Activated B cell treated with CpG ODN at 0.5 μM for 24 hours (primary cell): ENCODE measurements at regions of chr6 and their contacts with region 1.

Region 1: DNA sequence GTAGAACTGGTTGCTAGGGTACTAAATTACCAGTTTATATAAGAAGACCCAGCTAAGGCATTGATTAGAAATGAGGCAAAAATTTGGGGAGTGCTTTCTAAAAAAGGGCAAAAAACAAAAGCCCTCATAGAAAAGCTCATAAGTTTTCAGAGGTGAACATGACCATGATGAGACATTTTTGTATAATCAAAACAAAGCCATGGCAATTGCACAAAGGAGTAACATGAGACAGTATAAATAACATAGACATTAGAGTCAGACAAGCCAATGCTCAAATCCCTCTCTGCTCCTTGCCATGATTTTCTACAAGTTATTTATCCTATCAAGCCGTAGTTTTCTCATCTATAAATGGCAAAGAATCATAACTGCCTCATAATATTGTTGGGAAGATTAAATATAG is 112.2 kb upstream of the ADTRP start:
- DNase-seq: no peak
- ATAC-seq: no peak
- H3K4me3 Mint-ChIP-seq: no peak overlapping the region
- H3K27ac Mint-ChIP-seq: no peak overlapping the region
- H3K4me1 Mint-ChIP-seq: no peaks in the 10 kb centered on the region
- H3K27me3 Mint-ChIP-seq: no peaks in the 10 kb centered on the region
- CTCF ChIP-seq: no peak

Region 2: DNA sequence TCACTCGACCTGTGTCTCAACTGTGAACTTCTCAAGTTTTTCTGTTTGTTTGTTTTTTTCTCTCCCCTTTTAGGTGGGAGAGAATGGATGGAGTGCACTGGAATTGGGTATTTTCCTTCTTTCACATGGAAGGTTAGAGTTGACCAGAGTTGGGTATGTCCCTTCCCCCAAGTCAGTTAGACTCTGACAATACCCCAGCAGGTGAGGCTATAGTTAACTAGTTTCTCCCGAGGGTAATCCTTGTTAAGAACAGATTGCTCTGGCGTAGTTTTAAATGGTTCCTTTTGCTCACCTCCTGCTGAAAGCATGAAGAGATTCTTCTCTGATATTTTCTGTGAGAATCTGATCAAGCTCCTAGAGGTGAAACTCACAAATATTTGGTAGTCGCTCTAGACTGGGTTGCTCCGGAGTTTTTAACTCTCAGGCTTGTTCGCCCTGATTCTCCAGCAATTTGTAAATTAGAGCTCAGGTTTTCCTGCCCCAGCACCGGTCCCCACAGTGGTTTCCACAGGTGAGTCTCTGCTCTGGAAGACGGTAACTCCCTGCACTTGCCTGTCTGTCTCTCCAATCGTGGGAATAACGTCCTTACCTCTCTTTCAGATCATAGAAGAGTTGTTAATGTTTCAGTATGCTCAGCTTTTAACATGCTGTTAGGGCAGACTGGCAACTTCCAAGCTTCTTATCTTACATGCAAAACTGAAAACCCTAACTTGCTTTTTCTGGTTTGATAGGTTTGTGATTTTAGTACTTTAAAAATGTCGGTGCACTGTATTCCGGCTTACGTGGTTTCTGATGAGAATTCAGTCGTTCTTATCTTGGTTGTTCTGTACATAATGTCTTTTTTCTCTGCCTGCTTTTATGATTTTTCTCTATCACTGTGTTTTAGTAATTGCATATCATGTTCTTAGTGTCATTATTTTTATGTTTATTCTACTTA is 10.1 kb after region 1 on chr6:
- CTCF ChIA-PET with region 1: no interaction called
- POLR2A ChIA-PET with region 1: no interaction called
- intact Hi-C with region 1: loop called (anchors 2 kb)
- DNase-seq: no peak
- ATAC-seq: no peak
- H3K4me3 Mint-ChIP-seq: no peak overlapping the region
- H3K27ac Mint-ChIP-seq: no peak overlapping the region
- H3K4me1 Mint-ChIP-seq: peaks cover 12% of the 10 kb centered on the region
- H3K27me3 Mint-ChIP-seq: peaks cover 21% of the 10 kb centered on the region
- CTCF ChIP-seq: no peak

Region 3: GRCh38 chr6:12311106-12311505 is 420.3 kb after region 1 on chr6:
- CTCF ChIA-PET with region 1: no interaction called
- POLR2A ChIA-PET with region 1: no interaction called
- intact Hi-C with region 1: no loop called
- DNase-seq: no peak
- ATAC-seq: no peak
- H3K4me3 Mint-ChIP-seq: no peak overlapping the region
- H3K27ac Mint-ChIP-seq: no peak overlapping the region
- H3K4me1 Mint-ChIP-seq: no peaks in the 10 kb centered on the region
- H3K27me3 Mint-ChIP-seq: peaks cover 1% of the 10 kb centered on the region
- CTCF ChIP-seq: no peak